Lower leg skin (tissue), 4 donors: ENCODE measurements at regions of chr4 and their contacts with region 1.

Region 1: DNA sequence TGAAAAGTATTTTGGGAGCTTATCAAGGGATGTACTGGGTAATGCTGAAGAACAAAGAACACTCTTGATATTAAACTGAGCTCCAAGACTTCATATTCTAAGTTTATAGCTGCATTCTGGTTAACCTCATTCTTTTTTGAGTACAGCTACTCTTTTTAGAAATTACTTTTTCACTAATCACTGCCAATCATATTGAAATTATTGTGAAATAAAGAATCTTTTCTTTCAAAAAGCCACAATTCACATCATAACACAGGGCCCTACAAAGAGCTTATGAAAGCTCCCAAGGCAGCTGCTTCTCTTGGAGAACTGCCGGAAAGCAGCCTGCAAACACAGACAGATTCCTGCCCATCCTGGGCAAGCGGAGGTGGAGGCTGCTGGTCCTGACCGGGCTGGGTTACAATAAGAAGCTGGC is 121.4 kb downstream of the RNF150 start:
- DNase-seq: no peak
- H3K4me3 ChIP-seq: no peak overlapping the region
- CTCF ChIP-seq: no peak
- POLR2A ChIP-seq: no peak

Region 2: GRCh38 chr4:140189805-140190204 is 822.1 kb before region 1 on chr4:
- intact Hi-C with region 1: loop called (anchors 5 kb)
- DNase-seq: no peak
- H3K4me3 ChIP-seq: no peak overlapping the region
- CTCF ChIP-seq: no peak
- POLR2A ChIP-seq: no peak

Region 3: DNA sequence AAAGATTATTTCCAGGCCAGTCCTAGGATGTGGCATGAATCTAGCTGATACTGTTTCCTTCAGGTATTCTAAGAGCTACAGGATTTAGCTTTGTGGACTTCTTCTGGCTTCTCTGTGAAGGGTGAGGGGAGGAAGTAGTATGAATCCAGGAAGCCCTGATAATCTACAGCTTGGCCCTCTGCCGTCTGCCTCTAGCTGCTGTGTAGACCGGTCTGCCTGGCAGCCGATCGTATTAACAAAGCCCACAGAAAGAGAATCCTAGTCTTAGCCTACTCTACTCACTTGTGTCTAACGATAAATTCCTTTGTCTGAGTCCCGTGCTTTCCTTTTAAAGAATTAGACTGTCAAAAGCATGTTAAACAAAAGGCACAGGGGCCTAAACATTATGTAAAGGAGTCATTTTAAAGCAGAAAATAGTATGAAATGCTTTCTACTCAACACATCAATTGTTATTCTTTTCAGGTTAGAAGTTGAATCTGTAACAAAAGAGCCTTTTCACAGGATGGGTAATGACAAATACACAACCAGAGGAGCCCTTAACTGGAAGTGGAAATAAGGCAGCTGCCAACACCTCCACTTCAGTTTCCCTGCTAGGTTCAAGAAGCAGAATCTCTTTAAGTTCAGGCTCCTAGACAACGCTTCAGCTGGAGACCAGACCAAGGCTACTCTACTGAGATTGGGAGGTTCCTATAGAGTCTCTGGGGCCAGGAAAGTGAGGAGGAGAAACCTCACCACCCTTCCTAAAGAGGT is 394.2 kb before region 1 on chr4:
- intact Hi-C with region 1: no loop called
- DNase-seq: no peak
- H3K4me3 ChIP-seq: no peak overlapping the region
- CTCF ChIP-seq: no peak
- POLR2A ChIP-seq: no peak

Region 4: GRCh38 chr4:141090473-141090872 is 78.6 kb after region 1 on chr4:
- intact Hi-C with region 1: no loop called
- DNase-seq: no peak
- H3K4me3 ChIP-seq: no peak overlapping the region
- CTCF ChIP-seq: no peak
- POLR2A ChIP-seq: no peak

Region 5: DNA sequence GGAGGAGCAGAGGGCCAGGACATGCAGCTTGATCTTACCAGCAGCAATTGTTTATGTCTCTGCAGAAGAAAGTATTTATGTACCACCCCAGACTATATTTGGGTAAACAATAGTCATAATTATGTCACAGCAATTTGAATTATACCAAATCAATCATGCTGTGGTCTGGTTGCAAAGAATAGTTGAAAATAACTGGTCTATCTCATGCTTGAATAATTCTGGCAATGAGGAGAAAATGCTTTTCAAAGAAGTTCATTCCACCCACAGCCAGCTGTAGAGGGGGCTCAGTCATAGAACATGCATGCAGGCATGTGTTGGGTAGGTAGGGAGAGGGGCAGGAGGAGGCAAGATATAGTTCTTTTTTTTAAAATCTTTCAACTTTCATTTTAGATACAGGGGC is 1023.7 kb after region 1 on chr4:
- intact Hi-C with region 1: no loop called
- DNase-seq: no peak
- H3K4me3 ChIP-seq: no peak overlapping the region
- CTCF ChIP-seq: no peak
- POLR2A ChIP-seq: no peak